Naive thymus-derived CD4-positive, alpha-beta T cell (primary cell): ENCODE measurements at regions of chr9 and their contacts with region 1.

Region 1: GRCh38 chr9:6757456-6758247 is at the start of gene KDM4C:
- DNase-seq: peak; percentile 92 to 97 (median 94)
- ATAC-seq: peak; percentile 87
- H3K4me3 ChIP-seq: peak within 1 kb of the TSS; percentile 71
- H3K4me3 Mint-ChIP-seq: peak within 1 kb of the TSS; percentile 89 to 99 (median 96)
- H3K27ac ChIP-seq: peak within 1 kb of the TSS; percentile 98
- H3K27ac Mint-ChIP-seq: peak within 1 kb of the TSS; percentile 98 to 100 (median 100)
- H3K4me1 ChIP-seq: peaks cover 9 to 12% of the 10 kb centered on the region in 2 donors
- H3K4me1 Mint-ChIP-seq: peaks cover 12 to 41% (median 26%) of the 10 kb centered on the region in 7 donors
- H3K27me3 ChIP-seq: no peaks in the 10 kb centered on the region
- H3K27me3 Mint-ChIP-seq: no peaks in the 10 kb centered on the region
- total RNA-seq, gene KDM4C: 68.6 to 100 (median 93.3) TPM

Region 2: DNA sequence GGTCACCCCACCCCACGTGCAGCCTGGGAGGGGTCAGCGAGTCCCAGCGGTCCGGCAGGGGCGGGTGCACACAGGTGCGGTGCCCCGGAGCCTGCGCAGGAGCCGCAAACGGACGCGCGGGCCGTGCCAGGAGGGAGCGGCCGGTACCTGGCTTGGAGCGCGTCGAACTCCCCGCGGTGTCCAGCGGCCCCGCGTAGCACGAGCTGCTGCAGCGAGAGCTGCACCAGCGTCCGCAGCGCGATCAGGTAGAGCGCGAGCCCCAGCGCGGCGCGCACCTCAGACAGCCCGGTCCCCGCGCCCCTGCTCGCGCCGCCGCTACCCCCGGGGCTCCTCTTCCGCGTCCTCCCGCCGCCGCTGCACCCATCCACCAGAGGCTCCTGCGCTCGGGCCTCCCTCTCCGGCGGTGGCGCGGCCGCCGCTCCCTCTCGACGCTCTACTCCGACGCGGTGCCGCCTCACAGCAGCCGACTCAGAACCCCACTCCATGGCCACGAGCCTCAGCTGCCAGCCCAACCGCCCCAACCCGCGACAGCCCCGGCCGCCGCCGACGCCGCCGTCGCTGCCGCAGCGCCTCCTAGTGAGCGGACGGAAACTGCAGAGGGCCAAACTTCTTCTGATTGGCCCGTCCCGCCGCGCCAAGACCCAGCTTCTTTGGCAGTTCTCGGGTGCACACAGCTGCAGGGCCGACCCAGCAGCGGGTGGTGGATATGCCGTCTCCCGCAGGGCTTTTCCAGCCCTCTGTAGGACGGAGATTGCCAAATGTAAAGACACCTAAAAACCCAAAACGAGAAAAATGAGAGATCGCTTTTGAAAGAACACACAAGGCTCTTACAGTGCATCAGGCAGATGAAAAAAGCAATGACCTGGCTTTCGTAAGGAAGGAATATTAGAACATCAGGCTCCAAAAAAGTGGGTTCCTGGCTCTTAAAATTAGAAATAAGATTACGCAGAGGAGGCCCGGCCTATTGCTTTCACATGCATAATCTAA is 924.8 kb before region 1 on chr9 and contains the start of gene ERMP1:
- CTCF ChIA-PET with region 1: no interaction called
- POLR2A ChIA-PET with region 1: interaction called, 11 read pairs
- intact Hi-C with region 1: no loop called
- DNase-seq: peak; percentile 83 to 94 (median 91)
- ATAC-seq: peak; percentile 95
- H3K4me3 ChIP-seq: peak within 1 kb of the TSS; percentile 85
- H3K4me3 Mint-ChIP-seq: peak within 1 kb of the TSS; percentile 91 to 99 (median 95)
- H3K27ac ChIP-seq: peak within 1 kb of the TSS; percentile 60
- H3K27ac Mint-ChIP-seq: peak within 1 kb of the TSS; percentile 79 to 96 (median 89)
- H3K4me1 ChIP-seq: peaks cover 25 to 33% of the 10 kb centered on the region in 2 donors
- H3K4me1 Mint-ChIP-seq: peaks cover 28 to 71% (median 60%) of the 10 kb centered on the region in 7 donors
- H3K27me3 ChIP-seq: no peaks in the 10 kb centered on the region
- H3K27me3 Mint-ChIP-seq: no peaks in the 10 kb centered on the region
- total RNA-seq, gene ERMP1: 9.5 to 37.1 (median 20.0) TPM

Region 3: DNA sequence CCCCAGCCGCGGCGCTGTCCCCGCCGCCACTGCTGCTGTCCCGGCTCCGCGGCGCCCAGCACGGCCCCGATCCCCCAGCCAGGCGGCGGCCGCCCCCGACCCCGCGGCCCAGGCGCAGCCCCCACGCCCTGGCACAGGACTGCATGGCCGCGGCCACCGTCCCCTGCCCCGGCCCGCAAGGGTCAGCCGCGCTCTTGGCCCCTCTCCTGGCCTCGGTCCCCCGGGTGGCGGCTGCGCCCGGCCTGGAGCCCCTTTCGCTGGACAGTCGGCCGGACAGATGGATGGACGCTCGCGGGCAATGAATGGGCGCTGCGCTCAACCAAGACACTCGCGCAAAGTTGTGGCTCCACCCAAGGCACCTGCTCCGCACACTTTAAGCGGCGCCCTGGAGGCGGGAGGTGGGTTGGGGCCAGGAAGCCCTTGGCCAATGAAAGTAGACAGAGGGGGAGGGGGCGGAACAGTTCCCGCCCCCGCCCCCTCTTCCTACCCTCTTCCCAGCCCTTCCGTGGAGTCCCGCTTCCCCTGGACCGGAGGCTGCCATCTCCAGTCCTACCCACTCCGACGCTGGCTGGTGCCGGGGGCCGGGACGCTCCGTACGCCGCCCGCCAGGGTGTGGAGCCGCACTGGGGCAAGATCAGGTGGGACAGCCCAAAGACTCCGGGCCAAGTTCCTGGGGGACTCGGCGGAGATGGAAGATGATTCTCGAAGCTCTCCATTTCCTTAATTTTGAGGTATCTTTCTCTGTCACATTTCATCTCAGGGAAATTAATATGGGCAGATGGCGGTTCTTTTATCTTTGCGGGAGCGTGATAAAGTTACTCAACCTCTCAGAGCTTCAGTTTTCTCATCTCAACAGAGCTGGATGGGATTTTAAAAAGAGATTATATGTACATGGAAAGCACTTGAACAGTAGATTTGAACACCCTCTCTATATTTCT is 112.0 kb before region 1 on chr9 and contains the start of gene GLDC:
- CTCF ChIA-PET with region 1: no interaction called
- POLR2A ChIA-PET with region 1: interaction called, 4 read pairs
- intact Hi-C with region 1: loop called in 1 of 2 experiments (anchors 1 kb)
- DNase-seq: peak; percentile 6 to 44 (median 23)
- ATAC-seq: peak; percentile 83
- H3K4me3 ChIP-seq: peak within 1 kb of the TSS; percentile 62
- H3K4me3 Mint-ChIP-seq: peak within 1 kb of the TSS; percentile 86 to 92 (median 87)
- H3K27ac ChIP-seq: no peak within 1 kb of the TSS
- H3K27ac Mint-ChIP-seq: peak within 1 kb of the TSS in 6 of 9 donors; percentile 31 to 84 (median 48)
- H3K4me1 ChIP-seq: peaks cover 9 to 11% of the 10 kb centered on the region in 2 donors
- H3K4me1 Mint-ChIP-seq: peaks cover 18 to 25% (median 22%) of the 10 kb centered on the region in 7 donors
- H3K27me3 ChIP-seq: peaks cover 17 to 18% of the 10 kb centered on the region in 2 donors
- H3K27me3 Mint-ChIP-seq: peaks cover 51 to 81% (median 60%) of the 10 kb centered on the region in 5 donors
- total RNA-seq, gene GLDC: 0.56 to 2.2 (median 2.0) TPM in 3 of 5 experiments, not detected in the others

Region 4: GRCh38 chr9:6715755-6716643 is 41.7 kb before region 1 on chr9:
- CTCF ChIA-PET with region 1: no interaction called
- POLR2A ChIA-PET with region 1: interaction called, 51 read pairs
- intact Hi-C with region 1: loop called (anchors 1 kb)
- DNase-seq: peak; percentile 44 to 71 (median 58)
- ATAC-seq: peak; percentile 89
- H3K4me3 ChIP-seq: peak overlapping the region; percentile 77
- H3K4me3 Mint-ChIP-seq: peak overlapping the region; percentile 76 to 92 (median 89)
- H3K27ac ChIP-seq: peak overlapping the region; percentile 66
- H3K27ac Mint-ChIP-seq: peak overlapping the region; percentile 84 to 94 (median 90)
- H3K4me1 ChIP-seq: peaks cover 7% of the 10 kb centered on the region in 2 donors
- H3K4me1 Mint-ChIP-seq: peaks cover 0 to 10% (median 7%) of the 10 kb centered on the region in 7 donors
- H3K27me3 ChIP-seq: no peaks in the 10 kb centered on the region
- H3K27me3 Mint-ChIP-seq: no peaks in the 10 kb centered on the region

Region 5: DNA sequence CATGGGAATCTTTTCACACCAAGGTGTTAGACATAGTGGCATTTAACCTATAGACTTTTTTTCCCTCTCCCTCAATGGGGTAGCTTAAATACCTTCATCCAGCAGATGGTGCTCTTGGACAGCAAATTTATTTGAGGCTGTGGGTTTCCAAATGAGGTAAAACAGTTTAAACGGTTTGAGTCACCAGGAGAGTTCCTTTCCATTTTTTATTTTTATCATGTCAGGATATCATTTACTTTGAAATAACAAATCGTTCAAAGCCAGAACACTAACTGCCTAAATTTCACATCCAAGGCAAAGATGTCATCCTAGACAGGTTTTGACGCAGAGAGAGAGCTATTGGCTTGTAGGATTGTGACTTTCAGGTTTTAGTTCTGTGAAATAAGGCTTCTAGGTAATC is 69.8 kb after region 1 on chr9:
- CTCF ChIA-PET with region 1: interaction called, 3 read pairs
- POLR2A ChIA-PET with region 1: interaction called, 6 read pairs
- intact Hi-C with region 1: loop called in 1 of 2 experiments (anchors 5 kb)
- DNase-seq: peak in 8 of 9 donors; percentile 2 to 48 (median 38)
- ATAC-seq: peak; percentile 54
- H3K4me3 ChIP-seq: no peak overlapping the region
- H3K4me3 Mint-ChIP-seq: no peak overlapping the region
- H3K27ac ChIP-seq: no peak overlapping the region
- H3K27ac Mint-ChIP-seq: peak overlapping the region in 3 of 9 donors; percentile 5 to 53 (median 35)
- H3K4me1 ChIP-seq: no peaks in the 10 kb centered on the region
- H3K4me1 Mint-ChIP-seq: peaks cover 1 to 23% (median 8%) of the 10 kb centered on the region in 7 donors
- H3K27me3 ChIP-seq: no peaks in the 10 kb centered on the region
- H3K27me3 Mint-ChIP-seq: no peaks in the 10 kb centered on the region

Region 6: GRCh38 chr9:7799234-7799943 is 1041.7 kb after region 1 on chr9 and contains the start of gene DMAC1:
- CTCF ChIA-PET with region 1: no interaction called
- POLR2A ChIA-PET with region 1: no interaction called
- intact Hi-C with region 1: loop called in 1 of 2 experiments (anchors 5 kb)
- DNase-seq: peak; percentile 50 to 79 (median 72)
- ATAC-seq: peak; percentile 96
- H3K4me3 ChIP-seq: peak within 1 kb of the TSS; percentile 96
- H3K4me3 Mint-ChIP-seq: peak within 1 kb of the TSS; percentile 91 to 98 (median 95)
- H3K27ac ChIP-seq: peak within 1 kb of the TSS; percentile 88
- H3K27ac Mint-ChIP-seq: peak within 1 kb of the TSS; percentile 90 to 98 (median 93)
- H3K4me1 ChIP-seq: peaks cover 0 to 8% of the 10 kb centered on the region in 2 donors
- H3K4me1 Mint-ChIP-seq: peaks cover 12 to 62% (median 40%) of the 10 kb centered on the region in 7 donors
- H3K27me3 ChIP-seq: no peaks in the 10 kb centered on the region
- H3K27me3 Mint-ChIP-seq: peaks cover 0 to under 1% (median 0%) of the 10 kb centered on the region in 5 donors
- total RNA-seq, gene DMAC1: 17.5 to 54.1 (median 44.3) TPM